ENCODE measurements at regions of chr1 and their contacts with region 1.

Region 1: GRCh38 chr1:99481391-99481996 is 164.4 kb upstream of the PALMD start:
- DNase-seq: no peak
- H3K4me3 Mint-ChIP-seq: no peak overlapping the region
- H3K27ac Mint-ChIP-seq: no peak overlapping the region
- H3K4me1 Mint-ChIP-seq: no peaks in the 10 kb centered on the region
- H3K27me3 Mint-ChIP-seq: peaks cover 5% of the 10 kb centered on the region

Region 2: GRCh38 chr1:98794196-98794886 is 687.2 kb before region 1 on chr1:
- intact Hi-C with region 1: loop called (anchors 1 kb)
- DNase-seq: peak; percentile 22
- H3K4me3 Mint-ChIP-seq: no peak overlapping the region
- H3K27ac Mint-ChIP-seq: no peak overlapping the region
- H3K4me1 Mint-ChIP-seq: peaks cover 12% of the 10 kb centered on the region
- H3K27me3 Mint-ChIP-seq: peaks cover 10% of the 10 kb centered on the region

Region 3: GRCh38 chr1:99465176-99465900 is 16.2 kb before region 1 on chr1:
- intact Hi-C with region 1: no loop called
- DNase-seq: no peak
- H3K4me3 Mint-ChIP-seq: no peak overlapping the region
- H3K27ac Mint-ChIP-seq: no peak overlapping the region
- H3K4me1 Mint-ChIP-seq: no peaks in the 10 kb centered on the region
- H3K27me3 Mint-ChIP-seq: no peaks in the 10 kb centered on the region